B cell (primary cell): ENCODE measurements at regions of chr10 and their contacts with region 1.

Region 1: GRCh38 chr10:74244097-74244685 is 93.2 kb downstream of the ADK start:
- DNase-seq: peak; percentile 51
- ATAC-seq: no peak
- H3K4me3 ChIP-seq: no peak overlapping the region
- H3K4me3 Mint-ChIP-seq: no peak overlapping the region
- H3K27ac ChIP-seq: no peak overlapping the region
- H3K27ac Mint-ChIP-seq: no peak overlapping the region
- H3K4me1 ChIP-seq: no peaks in the 10 kb centered on the region
- H3K4me1 Mint-ChIP-seq: peaks cover 4% of the 10 kb centered on the region
- H3K27me3 ChIP-seq: no peaks in the 10 kb centered on the region
- H3K27me3 Mint-ChIP-seq: no peaks in the 10 kb centered on the region
- CTCF ChIP-seq: peak; percentile 78

Region 2: DNA sequence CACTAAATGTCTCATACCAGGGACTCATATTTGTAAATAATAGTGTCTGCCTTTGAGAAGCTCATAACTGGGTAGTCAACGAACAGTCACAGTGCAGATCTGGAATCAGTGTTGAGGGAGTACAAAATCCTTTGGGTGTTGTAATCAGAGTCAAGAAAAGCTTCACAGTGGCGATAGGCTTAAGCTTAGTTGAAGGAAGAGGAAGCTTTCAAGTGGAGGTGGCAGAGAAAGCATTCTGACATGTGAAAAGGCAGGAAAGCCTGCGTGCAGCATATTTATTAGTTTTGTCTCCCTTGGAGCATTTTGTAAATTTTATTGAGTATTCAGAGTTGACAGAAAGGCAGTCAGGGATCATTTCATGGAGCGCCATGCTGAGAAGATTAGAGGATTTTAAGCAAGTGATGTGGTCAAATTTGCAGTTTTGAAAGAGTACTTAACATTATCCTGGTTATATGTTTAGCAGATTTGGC is 11.7 kb after region 1 on chr10:
- CTCF ChIA-PET with region 1: interaction called, 11 read pairs
- POLR2A ChIA-PET with region 1: no interaction called
- intact Hi-C with region 1: no loop called
- DNase-seq: no peak
- ATAC-seq: no peak
- H3K4me3 ChIP-seq: no peak overlapping the region
- H3K4me3 Mint-ChIP-seq: no peak overlapping the region
- H3K27ac ChIP-seq: peak overlapping the region in 1 of 2 donors; percentile 3
- H3K27ac Mint-ChIP-seq: no peak overlapping the region
- H3K4me1 ChIP-seq: peaks cover 0 to 10% of the 10 kb centered on the region in 2 donors
- H3K4me1 Mint-ChIP-seq: peaks cover 41% of the 10 kb centered on the region
- H3K27me3 ChIP-seq: no peaks in the 10 kb centered on the region
- H3K27me3 Mint-ChIP-seq: no peaks in the 10 kb centered on the region
- CTCF ChIP-seq: no peak

Region 3: GRCh38 chr10:74282151-74282850 is 38.1 kb after region 1 on chr10:
- CTCF ChIA-PET with region 1: no interaction called
- POLR2A ChIA-PET with region 1: no interaction called
- intact Hi-C with region 1: no loop called
- DNase-seq: no peak
- ATAC-seq: no peak
- H3K4me3 ChIP-seq: no peak overlapping the region
- H3K4me3 Mint-ChIP-seq: no peak overlapping the region
- H3K27ac ChIP-seq: no peak overlapping the region
- H3K27ac Mint-ChIP-seq: no peak overlapping the region
- H3K4me1 ChIP-seq: peaks cover 0 to 3% of the 10 kb centered on the region in 2 donors
- H3K4me1 Mint-ChIP-seq: peaks cover 11% of the 10 kb centered on the region
- H3K27me3 ChIP-seq: no peaks in the 10 kb centered on the region
- H3K27me3 Mint-ChIP-seq: no peaks in the 10 kb centered on the region
- CTCF ChIP-seq: no peak

Region 4: GRCh38 chr10:76055963-76056362 is 1811.8 kb after region 1 on chr10:
- CTCF ChIA-PET with region 1: no interaction called
- POLR2A ChIA-PET with region 1: no interaction called
- intact Hi-C with region 1: no loop called
- DNase-seq: no peak
- ATAC-seq: no peak
- H3K4me3 ChIP-seq: no peak overlapping the region
- H3K4me3 Mint-ChIP-seq: no peak overlapping the region
- H3K27ac ChIP-seq: no peak overlapping the region
- H3K27ac Mint-ChIP-seq: no peak overlapping the region
- H3K4me1 ChIP-seq: no peaks in the 10 kb centered on the region
- H3K4me1 Mint-ChIP-seq: no peaks in the 10 kb centered on the region
- H3K27me3 ChIP-seq: no peaks in the 10 kb centered on the region
- H3K27me3 Mint-ChIP-seq: no peaks in the 10 kb centered on the region
- CTCF ChIP-seq: no peak